ENCODE measurements at regions of chr2 and their contacts with region 1.

Region 1: DNA sequence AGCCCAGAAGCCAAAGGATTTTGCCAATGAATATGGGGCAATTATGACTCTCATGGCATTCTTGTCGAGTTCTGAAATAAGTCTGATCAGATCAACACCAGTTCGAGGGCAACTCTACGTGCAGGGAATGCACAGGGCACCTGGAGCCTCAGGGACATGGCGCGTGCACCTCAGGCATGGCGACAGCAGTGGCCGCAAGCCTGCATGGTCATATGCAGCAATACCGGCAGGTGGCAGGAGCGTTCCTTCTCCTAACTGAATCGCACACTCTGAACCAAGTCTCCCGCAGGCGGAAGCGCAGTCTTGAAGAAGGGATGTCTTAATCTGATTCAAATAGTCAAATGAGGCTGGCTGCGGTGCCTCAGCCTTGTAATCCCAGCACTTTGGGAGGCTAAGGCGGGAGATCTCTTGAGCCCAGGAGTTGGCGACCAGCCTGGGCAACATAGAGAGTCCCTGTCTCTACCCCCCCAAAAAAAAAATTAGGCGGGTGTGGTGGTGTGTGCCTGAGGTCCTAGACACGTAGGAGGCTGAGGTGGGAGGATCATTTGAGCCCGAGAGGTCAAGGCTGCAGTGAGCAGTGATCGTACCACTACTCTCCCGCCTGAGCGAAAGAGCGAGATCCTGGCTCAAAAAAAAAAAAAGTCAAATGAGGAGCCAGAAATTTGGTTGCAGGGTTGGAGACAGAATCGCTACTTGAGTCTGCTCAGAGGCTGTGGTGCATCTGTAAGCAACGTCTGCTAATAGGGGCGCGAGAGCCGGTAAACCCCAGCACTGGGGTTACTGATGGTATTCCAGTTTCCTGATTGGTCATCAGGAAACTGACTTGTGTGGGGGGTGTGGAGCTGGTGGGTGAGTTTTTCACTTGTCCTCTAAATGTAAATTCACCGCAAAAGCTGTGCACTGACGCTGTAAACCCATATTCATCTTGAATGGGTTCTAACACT is 28.8 kb downstream of the FHL2 start:
- DNase-seq: peak; percentile 89
- ATAC-seq: peak; percentile 26

Region 2: DNA sequence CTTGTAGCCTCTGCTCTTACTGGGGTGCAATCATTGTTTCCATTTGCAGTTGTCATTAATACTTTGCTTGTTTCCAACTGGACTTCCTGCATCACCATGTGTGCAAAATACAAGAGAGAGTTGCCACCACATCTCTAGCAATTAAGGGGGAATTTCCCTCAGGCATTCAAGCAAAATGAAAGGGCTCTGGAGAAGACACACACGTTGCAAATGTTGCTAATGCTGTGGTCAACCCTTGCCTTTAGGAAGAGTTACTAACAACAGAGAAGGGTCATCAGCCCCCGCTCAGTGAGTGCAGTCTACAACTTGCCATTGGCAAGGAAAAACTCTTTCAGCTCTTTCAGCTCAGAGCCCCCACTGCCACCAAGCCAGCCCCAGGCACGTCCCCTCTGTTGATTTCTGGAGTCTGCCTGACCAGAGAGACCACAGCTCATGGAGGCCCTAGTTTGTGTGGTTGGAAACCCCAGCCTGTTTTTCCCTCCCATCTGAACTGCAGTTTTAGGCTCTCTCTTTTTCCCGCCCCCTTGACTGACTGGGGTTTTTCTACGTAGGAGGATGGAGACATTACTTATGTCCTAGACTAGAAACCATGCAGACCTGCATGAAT is 154.3 kb before region 1 on chr2:
- intact Hi-C with region 1: no loop called
- DNase-seq: no peak
- ATAC-seq: no peak

Region 3: GRCh38 chr2:105294844-105295481 is 75.1 kb before region 1 on chr2:
- intact Hi-C with region 1: no loop called
- DNase-seq: no peak
- ATAC-seq: peak; percentile 42

Region 4: GRCh38 chr2:105496271-105496670 is 126.3 kb after region 1 on chr2:
- intact Hi-C with region 1: loop called (anchors 5 kb)
- DNase-seq: no peak
- ATAC-seq: peak; percentile 83

Region 5: GRCh38 chr2:105521205-105521604 is 151.2 kb after region 1 on chr2:
- intact Hi-C with region 1: loop called (anchors 2 kb)
- DNase-seq: no peak
- ATAC-seq: no peak

Region 6: DNA sequence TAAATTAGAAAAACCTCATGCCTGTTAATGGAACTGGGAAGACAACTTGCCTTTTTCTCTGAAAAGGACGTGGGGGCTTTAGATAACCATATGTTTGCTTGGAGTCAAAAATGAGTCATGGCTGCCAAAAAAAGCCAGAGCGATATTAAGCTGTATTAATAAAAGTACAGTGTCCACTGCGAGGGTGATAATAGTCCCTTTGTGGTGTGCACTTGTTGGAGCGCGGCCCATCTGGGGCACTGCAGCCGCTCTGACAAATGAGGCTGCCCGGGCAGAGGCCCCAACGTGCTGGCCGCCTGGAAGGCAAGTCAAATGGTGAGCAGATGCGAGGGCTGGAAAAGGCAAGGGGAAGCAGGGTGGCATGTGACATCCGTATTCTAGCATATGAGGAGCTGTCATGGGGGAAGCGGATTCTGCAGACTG is 271.4 kb after region 1 on chr2:
- intact Hi-C with region 1: no loop called
- DNase-seq: no peak
- ATAC-seq: no peak